Gastrocnemius medialis (tissue), 4 donors: ENCODE measurements at regions of chr5 and their contacts with region 1.

Region 1: GRCh38 chr5:116771466-116772151 is 197.0 kb upstream of the SEMA6A start:
- DNase-seq: peak in 1 of 2 donors; percentile 20
- ATAC-seq: peak; percentile 30 to 74
- H3K4me3 ChIP-seq: no peak overlapping the region
- H3K27ac ChIP-seq: peak overlapping the region in 2 of 4 donors; percentile 7 to 33
- H3K4me1 ChIP-seq: no peaks in the 10 kb centered on the region
- H3K27me3 ChIP-seq: no peaks in the 10 kb centered on the region
- CTCF ChIP-seq: no peak
- POLR2A ChIP-seq: no peak

Region 2: GRCh38 chr5:116652196-116652729 is 119.3 kb before region 1 on chr5:
- in situ Hi-C with region 1: no loop called
- intact Hi-C with region 1: loop called (anchors 2 kb)
- DNase-seq: peak; percentile 51 to 71
- ATAC-seq: peak; percentile 77 to 83
- H3K4me3 ChIP-seq: no peak overlapping the region
- H3K27ac ChIP-seq: peak overlapping the region in 2 of 4 donors; percentile 24 to 56
- H3K4me1 ChIP-seq: peaks cover 4 to 6% of the 10 kb centered on the region in 2 donors
- H3K27me3 ChIP-seq: peaks cover 0 to 4% (median 0%) of the 10 kb centered on the region in 3 donors
- CTCF ChIP-seq: no peak
- POLR2A ChIP-seq: no peak